Posterior vena cava (tissue), 2 donors: ENCODE measurements at regions of chr1 and their contacts with region 1.

Region 1: DNA sequence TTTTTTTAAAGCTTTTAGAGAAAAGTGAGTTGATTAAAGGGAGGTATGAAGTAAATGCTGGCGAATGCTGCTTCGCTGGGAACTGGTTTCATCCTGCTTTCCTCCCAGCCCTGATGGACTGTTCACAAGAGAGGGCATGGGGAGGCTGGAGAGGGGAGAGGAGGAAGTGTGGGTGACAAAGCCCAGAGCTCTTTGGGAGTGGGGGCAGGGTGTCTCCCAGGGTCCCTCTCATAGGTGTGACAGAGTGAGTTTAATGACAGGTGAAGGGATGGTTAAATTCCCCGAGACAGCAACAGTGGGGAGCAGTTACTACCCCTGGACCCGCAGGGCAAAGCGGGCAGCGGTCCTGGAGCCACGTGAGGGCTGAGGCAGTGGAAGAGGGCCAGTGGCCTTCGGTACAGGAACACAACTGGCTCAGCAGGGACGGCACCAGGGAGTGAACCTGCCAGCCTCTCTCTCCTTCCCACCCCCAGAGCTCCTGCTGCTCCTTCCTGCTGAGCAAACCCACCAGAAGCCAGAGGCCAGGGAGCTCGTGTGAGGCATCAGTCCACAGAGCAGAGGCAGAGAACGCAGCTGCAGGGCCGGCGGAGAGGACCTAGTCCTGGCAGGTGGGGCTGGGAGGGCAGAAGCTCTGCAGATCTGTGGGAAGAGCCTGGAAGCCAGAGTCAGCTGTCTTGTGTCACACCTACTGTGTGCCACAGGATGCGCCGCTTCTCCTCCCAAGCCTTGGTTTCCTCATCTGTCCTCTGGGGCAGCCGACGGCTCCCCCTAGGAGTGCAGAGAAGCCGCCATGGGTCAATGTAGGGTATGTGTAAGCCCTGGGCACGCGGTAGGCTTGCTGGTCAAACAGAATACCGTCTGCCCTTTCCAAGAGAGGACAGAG is 20.9 kb upstream of the LRP8 start:
- DNase-seq: peak; percentile 51

Region 2: GRCh38 chr1:53145942-53146708 is 202.6 kb before region 1 on chr1:
- intact Hi-C with region 1: no loop called
- DNase-seq: peak; percentile 94

Region 3: GRCh38 chr1:53316766-53317581 is 31.8 kb before region 1 on chr1:
- intact Hi-C with region 1: loop called in 1 of 2 experiments (anchors 1 kb)
- DNase-seq: no peak

Region 4: GRCh38 chr1:53393325-53393792 is 44.6 kb after region 1 on chr1:
- intact Hi-C with region 1: no loop called
- DNase-seq: peak; percentile 91

Region 5: GRCh38 chr1:53413175-53414001 is 64.7 kb after region 1 on chr1:
- intact Hi-C with region 1: no loop called
- DNase-seq: no peak